ENCODE measurements at regions of chr2 and their contacts with region 1.

Region 1: DNA sequence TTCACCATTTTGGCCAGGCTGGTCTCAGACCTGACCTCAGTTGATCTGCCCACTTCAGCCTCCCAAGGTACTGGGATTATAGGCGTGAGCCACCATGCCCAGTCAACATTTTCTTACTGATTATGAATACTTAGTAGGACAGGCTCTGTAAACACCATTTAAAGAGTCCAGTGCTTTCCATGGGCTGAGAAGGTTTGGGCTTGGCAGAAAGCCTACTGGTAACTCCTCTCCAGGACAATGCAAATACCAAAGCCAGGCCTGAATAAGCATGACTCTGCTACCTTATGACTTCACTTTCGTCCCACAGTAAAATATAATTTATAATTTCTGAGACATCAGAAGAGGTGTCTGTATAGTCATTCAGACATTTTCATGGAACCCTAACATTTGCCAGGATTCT is 60.2 kb upstream of the FAM117B start:
- DNase-seq: no peak
- H3K27ac ChIP-seq: no peak overlapping the region
- CTCF ChIP-seq: no peak

Region 2: DNA sequence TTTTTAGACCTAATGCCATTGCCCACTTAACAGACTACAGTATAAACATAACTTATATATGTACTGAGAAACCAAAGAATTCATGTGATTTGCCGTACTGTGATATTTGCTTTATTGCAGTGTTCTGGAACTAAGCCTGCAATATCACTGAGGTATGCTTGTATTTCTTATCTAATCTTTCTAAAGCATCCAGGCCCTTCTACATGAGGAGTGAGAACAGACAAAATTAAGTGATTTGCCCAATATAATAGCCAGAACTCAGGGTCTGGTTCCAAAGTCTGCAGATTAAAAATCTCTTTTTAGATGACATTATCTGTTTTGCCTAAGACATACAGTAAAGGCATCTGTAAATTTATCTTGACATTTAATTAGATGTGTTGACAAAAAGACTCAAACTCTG is 156.5 kb before region 1 on chr2:
- CTCF ChIA-PET with region 1: no interaction called
- POLR2A ChIA-PET with region 1: no interaction called
- DNase-seq: no peak
- H3K27ac ChIP-seq: no peak overlapping the region
- CTCF ChIP-seq: no peak

Region 3: GRCh38 chr2:202831242-202832220 is 257.0 kb after region 1 on chr2:
- CTCF ChIA-PET with region 1: no interaction called
- POLR2A ChIA-PET with region 1: interaction called, 11 read pairs
- DNase-seq: peak; percentile 71
- H3K27ac ChIP-seq: no peak overlapping the region
- CTCF ChIP-seq: peak; percentile 70